ENCODE measurements at regions of chr6 and their contacts with region 1.

Region 1: GRCh38 chr6:130946076-130946475 is 117.0 kb downstream of the EPB41L2 start:
- DNase-seq: no peak
- ATAC-seq: no peak
- H3K4me3 ChIP-seq: no peak overlapping the region
- H3K4me3 Mint-ChIP-seq: no peak overlapping the region
- H3K27ac ChIP-seq: no peak overlapping the region
- H3K27ac Mint-ChIP-seq: no peak overlapping the region
- H3K4me1 ChIP-seq: peaks cover 0 to 2% of the 10 kb centered on the region in 2 donors
- H3K4me1 Mint-ChIP-seq: peaks cover 14% of the 10 kb centered on the region
- H3K27me3 ChIP-seq: no peaks in the 10 kb centered on the region
- H3K27me3 Mint-ChIP-seq: no peaks in the 10 kb centered on the region
- CTCF ChIP-seq: no peak

Region 2: DNA sequence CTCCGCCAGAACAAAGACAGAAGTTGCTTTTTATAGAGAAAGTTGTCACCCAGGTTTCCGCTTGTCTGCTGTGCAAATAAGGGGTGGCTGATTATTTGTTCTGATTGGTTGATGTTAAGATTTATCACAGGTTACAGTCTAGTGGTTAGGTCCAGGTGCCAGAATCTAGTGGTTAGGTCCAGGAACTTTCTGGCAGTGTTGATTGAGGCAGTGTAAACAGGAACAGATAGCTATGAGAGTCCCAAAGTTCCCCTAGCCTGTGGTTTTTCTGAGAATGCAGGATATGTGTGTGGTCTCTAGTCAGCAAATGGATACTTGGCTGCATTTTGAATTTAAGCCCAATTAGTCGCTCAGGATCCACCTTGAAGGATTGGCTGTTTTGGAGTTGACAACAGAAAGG is 432.3 kb before region 1 on chr6:
- CTCF ChIA-PET with region 1: no interaction called
- POLR2A ChIA-PET with region 1: interaction called, 10 read pairs
- intact Hi-C with region 1: no loop called
- DNase-seq: peak; percentile 65
- ATAC-seq: peak; percentile 79
- H3K4me3 ChIP-seq: peak overlapping the region in 1 of 5 experiments; percentile 15
- H3K4me3 Mint-ChIP-seq: peak overlapping the region; percentile 57
- H3K27ac ChIP-seq: peak overlapping the region in 1 of 2 donors; percentile 85
- H3K27ac Mint-ChIP-seq: peak overlapping the region; percentile 86
- H3K4me1 ChIP-seq: peaks cover 17 to 28% of the 10 kb centered on the region in 2 donors
- H3K4me1 Mint-ChIP-seq: peaks cover 47% of the 10 kb centered on the region
- H3K27me3 ChIP-seq: no peaks in the 10 kb centered on the region
- H3K27me3 Mint-ChIP-seq: no peaks in the 10 kb centered on the region
- CTCF ChIP-seq: no peak

Region 3: GRCh38 chr6:131059486-131059885 is 113.4 kb after region 1 on chr6:
- CTCF ChIA-PET with region 1: no interaction called
- POLR2A ChIA-PET with region 1: no interaction called
- intact Hi-C with region 1: no loop called
- DNase-seq: no peak
- ATAC-seq: no peak
- H3K4me3 ChIP-seq: no peak overlapping the region
- H3K4me3 Mint-ChIP-seq: no peak overlapping the region
- H3K27ac ChIP-seq: no peak overlapping the region
- H3K27ac Mint-ChIP-seq: no peak overlapping the region
- H3K4me1 ChIP-seq: peaks cover 27 to 32% of the 10 kb centered on the region in 2 donors
- H3K4me1 Mint-ChIP-seq: peaks cover 33% of the 10 kb centered on the region
- H3K27me3 ChIP-seq: no peaks in the 10 kb centered on the region
- H3K27me3 Mint-ChIP-seq: no peaks in the 10 kb centered on the region
- CTCF ChIP-seq: no peak

Measured in B cell (primary cell).